OCI-LY7 (cell line): ENCODE measurements at regions of chr12 and their contacts with region 1.

Region 1: GRCh38 chr12:24948757-24949722 is at the start of gene BCAT1:
- DNase-seq: peak; percentile 93
- H3K4me3 ChIP-seq: peak within 1 kb of the TSS; percentile 79
- H3K27ac ChIP-seq: peak within 1 kb of the TSS; percentile 70
- H3K4me1 ChIP-seq: peaks cover 59% of the 10 kb centered on the region
- CTCF ChIP-seq: peak; percentile 49; the same call in 1 of the 2 replicates
- total RNA-seq, gene BCAT1: 116 and 121 TPM in 2 replicates

Region 2: GRCh38 chr12:24414480-24414879 is 534.6 kb before region 1 on chr12:
- CTCF ChIA-PET with region 1: no interaction called
- POLR2A ChIA-PET with region 1: no interaction called
- intact Hi-C with region 1: no loop called
- DNase-seq: no peak
- H3K4me3 ChIP-seq: no peak overlapping the region
- H3K27ac ChIP-seq: no peak overlapping the region
- H3K4me1 ChIP-seq: no peaks in the 10 kb centered on the region
- CTCF ChIP-seq: no peak

Region 3: GRCh38 chr12:24931666-24932405 is 17.2 kb before region 1 on chr12:
- CTCF ChIA-PET with region 1: no interaction called
- POLR2A ChIA-PET with region 1: interaction called, 27 read pairs
- intact Hi-C with region 1: no loop called
- DNase-seq: peak; percentile 87
- H3K4me3 ChIP-seq: peak overlapping the region; percentile 47
- H3K27ac ChIP-seq: peak overlapping the region; percentile 64
- H3K4me1 ChIP-seq: peaks cover 52% of the 10 kb centered on the region
- CTCF ChIP-seq: no peak

Region 4: DNA sequence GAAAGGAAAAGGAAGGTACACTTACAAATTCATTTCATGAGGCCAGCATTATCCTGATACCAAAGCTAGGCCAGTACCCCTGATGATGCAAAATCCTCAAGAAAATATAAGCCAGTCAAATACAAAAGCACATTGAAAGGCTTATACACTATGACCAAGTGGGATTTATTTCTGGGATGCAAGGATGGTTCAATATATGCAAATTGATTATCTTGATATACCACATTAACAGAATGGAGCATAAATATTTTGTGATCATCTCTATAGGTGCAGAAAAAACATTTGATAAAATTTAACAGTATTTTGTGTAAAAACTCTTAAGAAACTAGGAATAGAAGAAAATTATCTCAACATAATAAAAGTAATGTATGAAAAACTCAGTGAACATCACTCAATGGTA is 96.8 kb after region 1 on chr12:
- CTCF ChIA-PET with region 1: no interaction called
- POLR2A ChIA-PET with region 1: no interaction called
- intact Hi-C with region 1: no loop called
- DNase-seq: no peak
- H3K4me3 ChIP-seq: no peak overlapping the region
- H3K27ac ChIP-seq: no peak overlapping the region
- H3K4me1 ChIP-seq: peaks cover 10% of the 10 kb centered on the region
- CTCF ChIP-seq: no peak